ENCODE measurements at regions of chr2 and their contacts with region 1.

Region 1: DNA sequence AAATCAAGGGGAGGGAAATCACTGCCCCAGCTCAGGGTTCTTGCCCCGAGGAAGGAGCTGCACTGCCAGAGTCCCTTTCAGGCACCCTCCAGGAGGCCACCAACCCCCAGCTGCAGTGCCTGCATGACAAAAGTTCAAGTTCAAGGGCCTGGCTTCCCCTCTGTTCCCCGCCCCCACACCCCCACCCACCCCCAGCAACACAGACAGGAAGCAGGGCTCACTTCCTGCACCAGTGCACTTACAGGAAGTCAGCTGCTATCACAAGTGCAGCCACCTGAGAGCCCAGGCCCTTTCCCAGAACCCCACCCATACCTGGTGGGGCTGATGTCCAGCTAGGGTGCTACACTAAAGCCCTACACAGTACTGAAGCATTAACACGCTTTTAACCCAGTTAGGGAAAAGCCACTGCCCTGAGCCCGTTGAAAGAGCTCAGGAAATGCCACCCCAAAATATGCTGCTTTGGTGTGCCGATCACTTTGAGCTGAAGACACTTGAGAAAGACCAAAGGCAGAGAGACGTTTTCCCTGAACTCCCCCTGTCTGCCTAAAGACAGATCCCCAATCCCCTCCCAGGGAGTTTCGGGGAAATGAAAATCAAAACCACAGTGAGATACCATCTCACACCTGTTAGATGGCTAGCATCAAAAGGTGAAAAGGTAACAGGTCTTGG is 109.9 kb upstream of the CAB39 start:
- DNase-seq: peak; percentile 41
- ATAC-seq: peak; percentile 80
- H3K4me3 Mint-ChIP-seq: peak overlapping the region; percentile 66
- H3K27ac Mint-ChIP-seq: peak overlapping the region; percentile 96
- H3K4me1 Mint-ChIP-seq: peaks cover 94% of the 10 kb centered on the region
- H3K27me3 Mint-ChIP-seq: no peaks in the 10 kb centered on the region
- CTCF ChIP-seq: no peak

Region 2: GRCh38 chr2:230447455-230448451 is 154.9 kb before region 1 on chr2:
- CTCF ChIA-PET with region 1: no interaction called
- POLR2A ChIA-PET with region 1: interaction called, 35 read pairs
- intact Hi-C with region 1: no loop called
- DNase-seq: no peak
- ATAC-seq: peak; percentile 81
- H3K4me3 Mint-ChIP-seq: peak overlapping the region; percentile 83
- H3K27ac Mint-ChIP-seq: peak overlapping the region; percentile 99
- H3K4me1 Mint-ChIP-seq: peaks cover 93% of the 10 kb centered on the region
- H3K27me3 Mint-ChIP-seq: no peaks in the 10 kb centered on the region
- CTCF ChIP-seq: no peak

Region 3: GRCh38 chr2:230564805-230565779 is 37.6 kb before region 1 on chr2:
- CTCF ChIA-PET with region 1: no interaction called
- POLR2A ChIA-PET with region 1: interaction called, 5 read pairs
- intact Hi-C with region 1: loop called (anchors 2 kb)
- DNase-seq: no peak
- ATAC-seq: peak; percentile 91
- H3K4me3 Mint-ChIP-seq: peak overlapping the region; percentile 47
- H3K27ac Mint-ChIP-seq: peak overlapping the region; percentile 78
- H3K4me1 Mint-ChIP-seq: peaks cover 41% of the 10 kb centered on the region
- H3K27me3 Mint-ChIP-seq: no peaks in the 10 kb centered on the region
- CTCF ChIP-seq: no peak

Measured in activated B cell treated with CpG ODN at 0.5 μM for 24 hours (primary cell).